ENCODE measurements at regions of chr2 and their contacts with region 1.

Region 1: DNA sequence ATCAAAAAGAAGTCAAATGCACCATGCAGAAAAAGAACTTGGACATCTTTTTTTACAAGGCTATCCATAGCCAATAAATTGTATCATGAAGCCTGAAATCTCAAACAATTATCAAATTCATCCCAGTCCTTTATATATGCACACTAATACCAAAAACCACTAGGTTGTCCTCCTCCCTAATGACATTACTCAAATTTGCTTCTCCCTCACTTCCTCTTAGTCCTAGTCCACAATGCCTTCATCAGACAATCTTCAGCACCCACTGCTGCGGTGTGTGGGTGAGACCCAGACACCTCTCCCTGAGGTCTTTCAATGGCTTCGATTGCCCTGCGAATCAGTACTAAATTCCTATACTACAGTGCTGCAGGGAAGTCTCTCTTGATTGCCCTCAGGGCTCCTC is 58.1 kb downstream of the CLASP1 start:
- DNase-seq: no peak
- H3K4me3 ChIP-seq: no peak overlapping the region
- H3K27ac ChIP-seq: no peak overlapping the region
- H3K4me1 ChIP-seq: peaks cover 8% of the 10 kb centered on the region
- H3K27me3 ChIP-seq: no peaks in the 10 kb centered on the region
- CTCF ChIP-seq: no peak
- POLR2A ChIP-seq: no peak

Region 2: DNA sequence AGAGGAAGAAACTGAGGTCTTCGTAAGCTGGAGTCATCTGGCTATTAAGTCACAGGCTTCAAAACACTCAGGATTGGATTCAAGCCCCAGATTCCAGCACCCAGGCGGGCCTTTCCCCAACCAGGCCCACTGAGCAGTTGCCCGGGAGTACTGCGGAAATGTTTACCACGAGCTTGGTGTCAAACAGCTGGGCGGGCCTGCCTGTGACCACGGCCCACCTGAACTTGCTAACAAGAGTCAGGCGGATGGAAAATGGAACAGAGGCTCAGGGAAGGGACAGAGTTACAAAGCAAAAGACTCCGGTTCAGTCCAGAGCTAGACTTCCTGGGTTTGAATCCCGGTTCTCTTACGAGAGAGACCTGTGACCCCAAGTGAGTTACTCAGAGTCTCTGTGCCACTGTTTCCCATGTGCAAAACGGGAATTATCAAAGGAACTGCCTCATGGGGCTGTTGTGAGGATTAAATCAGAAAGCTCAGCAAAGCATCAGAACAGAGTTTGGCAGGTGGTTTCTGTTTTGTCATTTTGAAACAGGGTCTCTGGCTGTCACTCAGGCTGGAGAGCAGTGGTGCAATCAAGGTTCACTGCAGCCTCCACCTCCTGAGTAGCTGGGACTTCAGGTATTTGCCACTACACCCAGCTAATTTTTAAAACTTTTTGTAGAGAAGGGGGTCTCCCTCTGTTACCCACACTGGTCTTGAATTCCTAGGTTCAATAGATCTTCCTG is 257.2 kb before region 1 on chr2:
- intact Hi-C with region 1: no loop called
- DNase-seq: no peak
- H3K4me3 ChIP-seq: no peak overlapping the region
- H3K27ac ChIP-seq: no peak overlapping the region
- H3K4me1 ChIP-seq: no peaks in the 10 kb centered on the region
- H3K27me3 ChIP-seq: no peaks in the 10 kb centered on the region
- CTCF ChIP-seq: no peak
- POLR2A ChIP-seq: no peak

Region 3: GRCh38 chr2:121377646-121378045 is 213.6 kb before region 1 on chr2:
- intact Hi-C with region 1: loop called (anchors 5 kb)
- DNase-seq: no peak
- H3K4me3 ChIP-seq: no peak overlapping the region
- H3K27ac ChIP-seq: peak overlapping the region in 1 of 2 donors; percentile 5
- H3K4me1 ChIP-seq: peaks cover 12% of the 10 kb centered on the region
- H3K27me3 ChIP-seq: no peaks in the 10 kb centered on the region
- CTCF ChIP-seq: no peak
- POLR2A ChIP-seq: no peak

Region 4: GRCh38 chr2:121479882-121480522 is 111.2 kb before region 1 on chr2:
- intact Hi-C with region 1: no loop called
- DNase-seq: no peak
- H3K4me3 ChIP-seq: no peak overlapping the region
- H3K27ac ChIP-seq: no peak overlapping the region
- H3K4me1 ChIP-seq: peaks cover 20% of the 10 kb centered on the region
- H3K27me3 ChIP-seq: no peaks in the 10 kb centered on the region
- CTCF ChIP-seq: no peak
- POLR2A ChIP-seq: no peak

Region 5: DNA sequence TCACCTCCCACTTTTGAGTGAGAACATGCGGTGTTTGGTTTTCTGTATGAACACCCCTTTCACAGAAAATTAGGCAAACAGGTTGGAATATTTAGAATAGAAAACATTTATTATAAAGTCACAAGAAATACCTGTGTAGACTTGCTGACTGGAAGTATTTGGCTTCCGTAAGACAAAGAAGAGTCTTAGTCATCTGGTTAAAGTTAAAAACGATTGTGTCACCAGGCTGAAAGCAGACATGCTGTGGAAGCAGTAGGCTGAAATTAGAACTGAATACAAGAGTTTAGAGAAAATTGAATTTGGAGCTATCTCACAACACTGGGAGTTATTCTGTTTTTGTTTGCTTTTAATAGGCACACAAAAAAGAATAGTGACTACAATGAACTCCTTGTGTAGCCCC is 74.3 kb after region 1 on chr2:
- intact Hi-C with region 1: no loop called
- DNase-seq: no peak
- H3K4me3 ChIP-seq: no peak overlapping the region
- H3K27ac ChIP-seq: no peak overlapping the region
- H3K4me1 ChIP-seq: no peaks in the 10 kb centered on the region
- H3K27me3 ChIP-seq: no peaks in the 10 kb centered on the region
- CTCF ChIP-seq: no peak
- POLR2A ChIP-seq: no peak

Region 6: DNA sequence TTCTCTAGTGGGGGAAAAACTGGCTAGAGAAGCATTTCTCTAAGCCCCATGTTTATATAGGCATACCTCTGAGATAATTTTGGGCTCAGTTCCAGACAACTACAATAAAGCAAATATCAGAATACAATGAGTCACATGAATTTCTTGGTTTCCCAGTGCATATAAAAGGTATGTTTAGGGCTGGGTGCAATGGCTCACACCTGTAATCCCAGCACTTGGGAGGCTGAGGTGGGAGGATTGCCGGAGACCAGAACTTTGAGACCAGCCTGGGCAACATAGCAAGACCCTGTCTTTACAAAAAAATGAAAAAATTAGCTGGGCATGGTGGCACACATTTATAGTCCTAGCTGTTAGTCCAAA is 186.5 kb after region 1 on chr2:
- intact Hi-C with region 1: no loop called
- DNase-seq: no peak
- H3K4me3 ChIP-seq: no peak overlapping the region
- H3K27ac ChIP-seq: no peak overlapping the region
- H3K4me1 ChIP-seq: no peaks in the 10 kb centered on the region
- H3K27me3 ChIP-seq: no peaks in the 10 kb centered on the region
- CTCF ChIP-seq: no peak
- POLR2A ChIP-seq: no peak

Measured in testis (tissue), 5 donors.